ENCODE measurements at regions of chr11 and their contacts with region 1.

Region 1: GRCh38 chr11:111926505-111927391 is 8.0 kb downstream of the C11orf52 start:
- DNase-seq: peak; percentile 98
- ATAC-seq: peak; percentile 90
- H3K4me3 Mint-ChIP-seq: peak overlapping the region; percentile 87
- H3K27ac Mint-ChIP-seq: peak overlapping the region; percentile 90
- H3K4me1 Mint-ChIP-seq: peaks cover 17% of the 10 kb centered on the region
- H3K27me3 Mint-ChIP-seq: no peaks in the 10 kb centered on the region
- CTCF ChIP-seq: no peak

Region 2: GRCh38 chr11:111870886-111871692 is 55.7 kb before region 1 on chr11 and contains the start of gene ALG9:
- CTCF ChIA-PET with region 1: interaction called, 4 read pairs
- POLR2A ChIA-PET with region 1: interaction called, 19 read pairs
- intact Hi-C with region 1: loop called (anchors 1 kb)
- DNase-seq: peak; percentile 90
- ATAC-seq: peak; percentile 89
- H3K4me3 Mint-ChIP-seq: peak within 1 kb of the TSS; percentile 93
- H3K27ac Mint-ChIP-seq: peak within 1 kb of the TSS; percentile 92
- H3K4me1 Mint-ChIP-seq: peaks cover 13% of the 10 kb centered on the region
- H3K27me3 Mint-ChIP-seq: no peaks in the 10 kb centered on the region
- CTCF ChIP-seq: no peak
- total RNA-seq, gene ALG9: 17.0 and 20.1 TPM in 2 replicates

Region 3: GRCh38 chr11:111905411-111905810 is 21.3 kb before region 1 on chr11:
- CTCF ChIA-PET with region 1: no interaction called
- POLR2A ChIA-PET with region 1: no interaction called
- intact Hi-C with region 1: no loop called
- DNase-seq: no peak
- ATAC-seq: no peak
- H3K4me3 Mint-ChIP-seq: no peak overlapping the region
- H3K27ac Mint-ChIP-seq: no peak overlapping the region
- H3K4me1 Mint-ChIP-seq: no peaks in the 10 kb centered on the region
- H3K27me3 Mint-ChIP-seq: peaks cover 24% of the 10 kb centered on the region
- CTCF ChIP-seq: no peak

Region 4: DNA sequence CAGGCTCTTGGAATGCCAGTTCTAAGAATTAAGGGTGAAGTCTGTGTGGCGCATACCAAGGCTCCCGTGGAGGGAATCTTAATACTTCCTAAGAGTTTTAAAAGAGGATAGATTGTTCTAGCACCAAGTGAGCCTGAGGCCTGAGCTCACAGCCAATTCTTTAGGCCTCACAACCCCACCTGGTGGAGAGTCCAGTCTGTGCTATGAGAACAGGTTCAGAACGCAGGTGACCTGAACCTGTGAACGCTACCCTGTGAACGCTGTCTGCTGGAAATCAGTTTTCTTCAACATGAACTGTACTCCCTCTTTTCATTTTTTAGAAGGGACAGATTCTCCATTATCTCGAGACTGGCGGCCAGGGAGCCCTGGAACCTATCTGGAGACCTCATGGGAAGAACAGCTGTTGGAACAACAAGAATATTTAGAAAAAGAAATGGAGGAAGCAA is 55.3 kb after region 1 on chr11:
- CTCF ChIA-PET with region 1: interaction called, 39 read pairs
- POLR2A ChIA-PET with region 1: interaction called, 8 read pairs
- intact Hi-C with region 1: loop called (anchors 1 kb)
- DNase-seq: no peak
- ATAC-seq: peak; percentile 85
- H3K4me3 Mint-ChIP-seq: no peak overlapping the region
- H3K27ac Mint-ChIP-seq: no peak overlapping the region
- H3K4me1 Mint-ChIP-seq: peaks cover 7% of the 10 kb centered on the region
- H3K27me3 Mint-ChIP-seq: peaks cover 21% of the 10 kb centered on the region
- CTCF ChIP-seq: no peak

Region 5: DNA sequence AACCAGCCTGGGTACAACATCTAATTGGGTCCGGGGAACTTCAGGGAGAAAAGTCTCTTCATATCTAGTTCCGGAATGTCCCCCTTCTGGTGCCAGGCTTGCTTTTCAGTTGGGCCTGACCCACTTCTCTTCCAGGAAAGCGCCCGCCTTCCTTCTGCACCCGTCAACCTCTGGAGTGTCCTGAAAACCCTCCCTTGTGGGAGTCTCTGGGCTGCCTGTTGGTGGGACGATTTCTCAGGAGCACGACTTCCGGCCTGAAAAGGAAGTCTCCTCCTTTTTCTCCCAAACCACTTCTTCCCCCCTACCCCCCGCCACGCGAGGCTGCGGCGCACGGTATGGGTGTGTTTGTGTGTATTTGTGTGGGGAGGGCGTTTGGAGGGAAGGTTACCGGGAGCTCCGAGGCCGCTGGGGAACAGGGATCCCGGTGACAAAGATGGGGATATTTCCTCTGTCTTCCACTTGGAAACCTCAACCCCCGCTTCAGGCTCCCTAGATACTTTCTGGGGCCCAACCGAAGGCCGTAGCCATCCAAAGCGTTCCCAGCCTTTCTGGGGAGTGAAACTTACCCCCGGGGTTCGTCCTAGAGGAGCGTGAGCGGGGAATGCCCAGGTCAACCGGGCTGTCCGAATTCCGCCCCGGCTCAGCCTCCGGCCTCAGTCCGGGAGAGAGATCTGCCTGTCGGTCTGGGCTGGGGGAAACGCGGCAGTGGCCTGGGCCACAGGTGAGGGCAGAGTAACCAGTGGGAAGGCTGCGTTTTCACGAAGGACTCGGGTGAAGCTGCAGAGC is 147.5 kb after region 1 on chr11 and contains the start of gene NKAPD1:
- CTCF ChIA-PET with region 1: interaction called, 3 read pairs
- POLR2A ChIA-PET with region 1: interaction called, 4 read pairs
- intact Hi-C with region 1: loop called (anchors 1 kb)
- DNase-seq: peak; percentile 69
- ATAC-seq: peak; percentile 82
- H3K4me3 Mint-ChIP-seq: peak within 1 kb of the TSS; percentile 96
- H3K27ac Mint-ChIP-seq: peak within 1 kb of the TSS; percentile 95
- H3K4me1 Mint-ChIP-seq: peaks cover 25% of the 10 kb centered on the region
- H3K27me3 Mint-ChIP-seq: no peaks in the 10 kb centered on the region
- CTCF ChIP-seq: no peak
- total RNA-seq, gene NKAPD1: 24.0 and 26.3 TPM in 2 replicates

Region 6: DNA sequence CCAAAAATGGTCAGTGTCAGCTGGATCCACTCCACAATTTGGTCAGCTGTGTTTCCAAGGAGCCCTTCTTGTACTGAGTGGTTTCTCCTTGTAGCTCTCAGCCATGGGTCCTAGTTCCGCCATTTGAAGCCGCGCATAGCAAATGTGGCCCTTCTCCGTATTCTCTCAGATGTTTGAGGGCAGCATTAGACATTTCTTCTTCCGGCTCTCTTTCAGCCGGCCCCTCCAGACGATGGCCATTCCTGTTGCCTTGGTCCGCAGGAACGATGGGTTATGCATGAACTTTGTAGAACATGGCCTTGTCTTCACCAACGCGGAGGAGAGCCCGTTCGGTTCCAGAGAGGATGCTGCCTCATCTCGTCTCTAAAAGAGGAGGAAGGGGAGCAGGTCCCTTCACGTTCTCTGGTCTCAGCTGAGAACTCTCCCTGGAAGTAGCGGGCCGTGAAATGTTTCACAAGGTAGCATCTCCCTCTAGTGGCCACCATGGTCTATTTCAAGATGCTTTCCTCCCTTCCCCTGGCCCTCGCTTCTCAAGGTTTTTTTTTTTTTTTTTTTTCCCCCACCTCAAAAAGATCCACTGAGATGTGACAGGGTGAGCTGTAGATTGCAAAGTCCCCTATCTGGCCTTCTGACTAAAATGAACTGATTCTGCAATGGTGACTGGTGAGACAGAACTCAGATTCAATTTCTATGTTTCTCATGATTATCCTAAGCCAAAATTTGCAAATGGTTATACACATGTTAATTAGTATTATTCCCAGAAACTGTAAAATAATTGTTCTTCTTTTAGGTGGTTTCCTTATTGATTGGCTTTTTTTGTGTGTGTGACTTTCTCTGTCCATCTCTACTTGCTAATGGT is 353.7 kb after region 1 on chr11:
- CTCF ChIA-PET with region 1: interaction called, 11 read pairs
- POLR2A ChIA-PET with region 1: no interaction called
- intact Hi-C with region 1: loop called (anchors 1 kb)
- DNase-seq: peak; percentile 47
- ATAC-seq: peak; percentile 91
- H3K4me3 Mint-ChIP-seq: peak overlapping the region; percentile 91
- H3K27ac Mint-ChIP-seq: peak overlapping the region; percentile 80
- H3K4me1 Mint-ChIP-seq: peaks cover 19% of the 10 kb centered on the region
- H3K27me3 Mint-ChIP-seq: no peaks in the 10 kb centered on the region
- CTCF ChIP-seq: no peak

Measured in activated B cell treated with CpG ODN at 0.5 μM for 24 hours (primary cell).